AG04449 (cell line): ENCODE measurements at regions of chr7 and their contacts with region 1.

Region 1: DNA sequence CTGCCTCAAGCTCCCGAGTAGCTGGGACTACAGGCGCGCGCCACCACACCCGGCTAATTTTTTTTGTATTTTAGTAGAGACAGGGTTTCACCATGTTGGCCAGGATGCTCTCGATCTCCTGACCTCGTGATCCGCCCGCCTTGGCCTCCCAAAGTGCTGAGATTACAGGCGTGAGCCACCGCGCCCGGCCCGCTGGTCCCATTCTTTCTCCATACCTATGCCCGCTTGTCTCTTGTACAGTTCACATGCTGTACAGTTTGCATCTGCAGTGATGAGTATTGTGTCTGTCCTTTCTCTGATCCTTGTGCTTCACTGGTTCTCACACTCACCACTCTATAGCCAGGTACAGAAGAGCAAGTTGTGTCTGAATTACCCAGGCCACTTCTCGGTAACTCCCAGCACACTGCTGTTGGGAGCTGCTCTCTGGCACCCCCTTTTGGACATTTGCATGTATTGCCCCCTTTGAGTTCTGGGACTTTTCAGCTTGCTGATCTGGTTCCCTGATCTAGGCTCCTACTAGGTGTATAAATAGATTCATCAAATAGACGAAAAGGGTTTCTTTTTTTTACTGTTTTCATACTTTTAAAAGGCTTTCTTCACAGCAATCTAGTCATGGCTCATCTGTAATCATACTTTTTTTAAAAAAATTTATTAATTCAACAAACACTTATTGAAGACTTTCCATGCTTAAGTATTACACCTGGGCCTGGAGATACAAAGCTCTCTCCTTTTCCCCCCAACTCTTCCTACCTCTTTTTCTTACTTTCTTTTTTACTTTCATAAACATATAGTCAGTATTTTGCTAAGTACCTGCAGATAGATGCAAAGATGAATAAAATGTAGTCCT is 53.5 kb downstream of the AOAH start:
- DNase-seq: no peak
- H3K4me3 ChIP-seq: no peak overlapping the region
- CTCF ChIP-seq: peak; percentile 86

Region 2: DNA sequence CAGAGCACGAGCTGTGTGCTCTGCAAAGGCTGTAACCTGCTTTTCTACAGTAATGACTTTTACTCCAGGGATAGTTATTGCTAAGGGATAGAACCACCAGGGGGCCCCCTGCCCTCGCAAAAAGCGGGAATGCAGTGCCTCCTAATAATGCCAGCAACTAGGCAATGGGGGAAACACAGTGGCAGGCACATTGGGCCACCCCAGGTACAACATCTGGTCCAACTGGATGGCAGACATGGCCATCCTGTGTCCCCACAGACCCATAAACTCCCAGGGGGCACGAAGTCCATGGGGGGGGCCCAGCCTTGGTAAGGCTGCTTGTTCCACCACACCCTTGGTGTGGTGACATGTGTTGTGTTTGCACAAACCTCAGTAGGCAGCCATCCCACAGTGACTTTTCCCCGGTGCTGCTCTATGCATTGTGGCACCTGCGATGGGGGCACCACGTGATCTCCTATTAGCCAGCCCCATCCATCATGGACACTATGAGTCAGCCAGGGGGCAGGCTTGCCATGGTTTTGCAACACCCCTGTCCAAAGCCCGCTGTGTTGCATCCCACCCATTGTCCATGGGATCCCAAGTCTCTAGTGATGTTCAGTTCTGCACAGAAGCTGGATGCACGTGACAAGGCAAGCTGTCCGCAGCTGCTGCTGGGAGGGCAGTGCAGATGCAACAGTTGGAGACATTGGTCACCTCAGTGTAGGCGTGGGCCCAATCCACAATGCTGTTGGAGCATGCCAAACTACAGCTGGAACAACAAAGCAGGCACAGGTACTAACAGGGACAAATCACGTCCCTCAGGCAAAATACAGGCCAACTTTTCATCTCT is 197.1 kb before region 1 on chr7:
- CTCF ChIA-PET with region 1: interaction called, 22 read pairs
- POLR2A ChIA-PET with region 1: no interaction called
- DNase-seq: no peak
- H3K4me3 ChIP-seq: no peak overlapping the region
- CTCF ChIP-seq: peak; percentile 55

Region 3: DNA sequence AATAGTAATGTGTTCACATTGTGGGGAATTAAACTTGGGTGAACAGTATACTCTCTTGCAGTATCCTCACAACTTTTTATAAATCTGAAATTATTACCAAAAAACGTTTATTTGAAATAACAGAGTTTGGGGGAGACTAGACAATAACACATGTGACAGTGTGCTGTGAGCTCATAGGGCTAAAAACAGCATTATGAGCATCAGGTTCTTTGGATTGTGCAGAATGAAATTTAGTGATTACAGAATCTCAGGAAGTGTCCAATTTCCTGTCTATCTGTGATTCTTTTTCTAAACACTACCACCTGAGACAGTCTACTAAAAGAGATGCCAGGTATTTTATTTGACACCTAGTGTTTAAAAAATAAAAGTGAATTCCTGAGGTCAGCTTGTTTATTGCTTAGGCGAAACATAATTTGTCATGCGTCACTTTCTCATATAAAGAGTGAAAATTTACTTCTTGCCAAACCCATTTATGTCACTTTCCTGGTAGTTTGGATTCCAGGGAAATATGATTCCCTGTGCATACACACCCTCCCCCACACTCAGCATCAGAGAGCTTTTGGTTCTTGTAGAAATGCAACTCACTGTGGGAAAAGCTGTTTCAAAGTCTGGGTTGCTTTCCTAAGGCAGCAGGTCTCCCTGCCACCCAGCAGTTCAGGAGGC is 17.7 kb before region 1 on chr7:
- CTCF ChIA-PET with region 1: interaction called, 43 read pairs
- POLR2A ChIA-PET with region 1: no interaction called
- DNase-seq: no peak
- H3K4me3 ChIP-seq: no peak overlapping the region
- CTCF ChIP-seq: no peak

Region 4: GRCh38 chr7:36682102-36682501 is 11.3 kb after region 1 on chr7:
- CTCF ChIA-PET with region 1: interaction called, 46 read pairs
- POLR2A ChIA-PET with region 1: no interaction called
- DNase-seq: no peak
- H3K4me3 ChIP-seq: no peak overlapping the region
- CTCF ChIP-seq: no peak